Common myeloid progenitor, CD34-positive (primary cell): ENCODE measurements at regions of chr1 and their contacts with region 1.

Region 1: DNA sequence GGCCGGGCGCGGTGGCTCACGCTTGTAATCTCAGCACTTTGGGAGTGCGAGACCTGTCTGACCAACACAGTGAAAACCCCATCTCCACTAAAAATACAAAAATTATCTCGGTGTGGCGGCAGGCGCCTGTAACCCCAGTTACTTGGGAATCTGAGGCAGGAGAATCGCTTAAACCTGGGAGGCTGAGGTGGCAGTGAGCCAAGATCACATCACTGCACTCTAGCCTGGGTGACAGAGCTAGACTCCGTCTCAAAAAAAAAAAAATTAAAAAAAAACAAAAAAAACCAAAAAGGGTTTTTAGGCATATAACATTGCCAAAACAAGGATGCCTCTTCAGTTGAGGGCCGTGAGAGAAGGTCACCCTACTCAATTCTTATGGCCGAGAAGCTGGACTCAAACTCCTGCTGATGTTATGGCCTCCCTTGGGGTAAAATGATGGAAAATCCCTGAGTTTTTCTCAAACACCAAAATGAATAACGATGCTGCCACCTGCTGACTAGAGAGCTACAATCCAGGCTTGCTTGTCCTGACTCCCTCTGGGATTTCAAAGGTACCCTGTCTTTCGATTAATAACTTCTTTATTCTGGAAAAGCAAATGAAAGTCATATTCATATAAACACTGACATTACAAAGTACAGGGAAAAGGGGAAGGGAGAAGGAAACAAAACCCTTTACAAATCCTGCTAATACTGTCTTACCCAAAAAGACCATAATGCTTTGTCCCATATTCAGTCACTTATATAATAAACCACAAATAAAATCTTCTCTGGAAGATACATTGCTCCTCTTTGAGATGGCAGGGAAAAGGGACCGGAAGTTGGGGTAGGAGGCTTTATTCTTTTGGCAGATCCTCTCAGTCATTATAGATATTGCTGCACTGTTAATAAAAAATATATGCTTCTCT is 10.7 kb downstream of the RAB42 start:
- DNase-seq: peak; percentile 59 to 70 (median 63)
- H3K4me3 ChIP-seq: no peak overlapping the region
- H3K27ac ChIP-seq: no peak overlapping the region
- H3K4me1 ChIP-seq: no peaks in the 10 kb centered on the region
- H3K27me3 ChIP-seq: no peaks in the 10 kb centered on the region

Region 2: DNA sequence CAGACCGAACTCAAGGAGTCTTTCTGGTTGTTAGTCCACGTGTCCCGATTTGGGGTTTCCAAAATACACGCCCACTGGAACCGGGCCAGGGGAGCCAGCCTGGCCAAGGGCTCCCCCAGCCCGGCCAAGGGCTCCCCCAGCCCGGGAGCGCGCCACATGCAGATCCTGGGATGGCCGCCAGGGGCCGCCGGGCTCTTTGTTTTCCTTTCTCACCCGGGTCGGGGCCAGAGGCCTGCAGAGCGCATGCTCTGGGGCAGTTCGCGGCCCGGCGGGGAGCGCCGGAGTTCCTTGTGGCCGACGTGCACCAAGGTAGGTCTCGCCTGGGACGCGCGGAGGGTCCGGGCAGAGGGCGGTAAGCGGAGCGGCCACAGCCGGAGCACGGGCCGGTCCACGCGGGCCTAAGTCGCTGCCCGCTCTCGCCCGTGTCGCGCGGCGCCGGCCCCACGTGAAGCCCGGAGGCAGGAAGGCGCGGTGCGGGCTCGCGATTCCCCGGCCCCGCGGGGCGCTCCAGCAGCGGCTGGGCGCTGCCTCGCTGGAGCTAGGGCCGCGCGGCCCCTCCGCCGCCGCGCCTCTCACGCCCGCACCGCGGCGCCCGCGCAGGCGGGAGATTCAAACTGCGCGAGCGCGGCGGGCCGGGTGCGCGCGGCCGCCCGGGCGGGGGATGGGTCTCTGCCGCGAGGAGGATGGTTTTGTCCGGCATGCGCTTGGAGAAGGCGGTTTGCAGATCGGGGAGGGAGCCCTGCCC is 84.6 kb before region 1 on chr1:
- CTCF ChIA-PET with region 1: interaction called, 28 read pairs
- POLR2A ChIA-PET with region 1: interaction called, 4 read pairs
- DNase-seq: peak; percentile 87 to 91 (median 89)
- H3K4me3 ChIP-seq: peak overlapping the region; percentile 78 to 93 (median 81)
- H3K27ac ChIP-seq: peak overlapping the region in 1 of 2 experiments; percentile 71
- H3K4me1 ChIP-seq: peaks cover 2 to 20% (median 18%) of the 10 kb centered on the region in 4 experiments
- H3K27me3 ChIP-seq: no peaks in the 10 kb centered on the region

Region 3: DNA sequence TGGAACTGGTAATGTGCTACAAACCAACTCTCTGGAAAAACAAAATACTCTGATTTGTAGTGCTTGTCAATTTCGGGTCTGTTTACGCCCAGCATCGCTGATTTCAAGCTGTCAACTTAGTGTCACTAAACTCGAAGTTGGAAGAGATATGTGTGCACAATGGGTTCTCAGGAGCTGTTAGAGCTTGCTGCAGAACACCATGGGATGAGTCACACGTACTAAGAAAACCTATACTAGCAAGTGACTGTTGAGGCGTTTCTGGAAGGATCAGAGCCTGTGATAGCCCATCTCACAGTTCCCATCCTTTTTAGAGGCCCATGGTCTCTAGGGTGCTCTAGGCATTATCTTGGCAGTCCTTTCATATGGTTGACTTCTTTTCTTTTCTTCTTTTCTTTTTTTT is 80.1 kb after region 1 on chr1:
- CTCF ChIA-PET with region 1: no interaction called
- POLR2A ChIA-PET with region 1: no interaction called
- DNase-seq: no peak
- H3K4me3 ChIP-seq: no peak overlapping the region
- H3K27ac ChIP-seq: no peak overlapping the region
- H3K4me1 ChIP-seq: no peaks in the 10 kb centered on the region
- H3K27me3 ChIP-seq: no peaks in the 10 kb centered on the region